Posterior cingulate gyrus (tissue), 11 donors: ENCODE measurements at regions of chr11 and their contacts with region 1.

Region 1: GRCh38 chr11:65290448-65291165 is 24.1 kb upstream of the CDC42EP2 start:
- DNase-seq: peak in 9 of 10 donors; percentile 42 to 97 (median 80)

Region 2: GRCh38 chr11:65314501-65315203 is 24.0 kb after region 1 on chr11 and contains the start of gene CDC42EP2:
- intact Hi-C with region 1: loop called (anchors 2 kb)
- DNase-seq: peak; percentile 76 to 98 (median 85)